ENCODE measurements at regions of chr12 and their contacts with region 1.

Region 1: GRCh38 chr12:47837190-47838171 is 17.8 kb upstream of the HDAC7 start:
- DNase-seq: peak; percentile 77
- ATAC-seq: peak; percentile 23
- H3K4me3 Mint-ChIP-seq: peak overlapping the region; percentile 44
- H3K27ac Mint-ChIP-seq: peak overlapping the region; percentile 68
- H3K4me1 Mint-ChIP-seq: peaks cover 61% of the 10 kb centered on the region
- H3K27me3 Mint-ChIP-seq: peaks cover 2% of the 10 kb centered on the region

Region 2: DNA sequence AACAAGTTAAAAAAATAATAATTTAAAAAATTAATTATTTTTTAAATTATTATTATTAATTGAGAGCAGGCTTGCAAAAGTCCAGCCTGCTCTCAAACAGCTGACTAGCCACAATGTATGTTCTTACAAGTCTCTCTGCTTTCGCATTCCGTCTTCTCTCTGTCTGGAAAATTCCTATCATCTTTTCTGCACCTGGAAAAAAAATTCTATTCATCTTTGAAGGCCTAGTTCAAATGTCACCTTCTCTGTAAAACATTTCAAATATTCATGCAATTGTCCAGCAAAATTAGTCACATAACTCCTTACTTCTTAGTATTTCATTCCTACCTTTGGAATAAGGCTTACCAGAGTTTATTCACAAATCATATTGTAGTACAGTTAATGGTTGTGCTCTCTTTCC is 207.2 kb before region 1 on chr12:
- CTCF ChIA-PET with region 1: no interaction called
- POLR2A ChIA-PET with region 1: no interaction called
- DNase-seq: no peak
- ATAC-seq: no peak
- H3K4me3 Mint-ChIP-seq: no peak overlapping the region
- H3K27ac Mint-ChIP-seq: no peak overlapping the region
- H3K4me1 Mint-ChIP-seq: no peaks in the 10 kb centered on the region
- H3K27me3 Mint-ChIP-seq: no peaks in the 10 kb centered on the region

Region 3: DNA sequence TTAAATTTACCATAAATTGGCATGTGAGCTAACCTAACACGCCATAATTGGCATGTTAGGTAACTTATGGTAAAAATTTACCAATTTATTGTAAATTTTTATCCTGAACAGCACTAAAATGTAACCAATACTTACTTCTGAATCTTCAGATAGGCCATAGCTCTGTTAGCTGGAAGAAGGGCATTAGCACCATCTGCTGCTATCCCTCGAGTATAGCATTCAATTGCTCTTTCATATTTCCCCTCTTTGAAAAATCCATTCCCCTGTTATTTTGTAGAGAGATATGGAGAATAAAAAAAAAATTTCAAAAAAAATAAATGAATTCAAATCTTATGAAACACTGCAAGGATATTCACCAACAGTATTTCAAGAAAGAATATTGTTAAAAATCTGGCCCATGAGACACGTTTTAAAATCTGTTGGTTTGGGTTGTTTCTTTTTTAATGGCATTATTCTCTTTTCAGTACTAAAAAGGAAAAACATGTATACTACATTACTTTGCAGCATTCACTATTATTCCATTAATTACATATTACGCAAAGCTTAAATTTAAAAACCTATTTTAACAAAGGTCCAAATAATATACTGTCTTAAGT is 150.7 kb before region 1 on chr12:
- CTCF ChIA-PET with region 1: no interaction called
- POLR2A ChIA-PET with region 1: no interaction called
- DNase-seq: peak; percentile 48
- ATAC-seq: peak; percentile 58
- H3K4me3 Mint-ChIP-seq: no peak overlapping the region
- H3K27ac Mint-ChIP-seq: no peak overlapping the region
- H3K4me1 Mint-ChIP-seq: no peaks in the 10 kb centered on the region
- H3K27me3 Mint-ChIP-seq: no peaks in the 10 kb centered on the region

Region 4: GRCh38 chr12:47705566-47706425 is 131.7 kb before region 1 on chr12 and contains the start of gene RPAP3:
- CTCF ChIA-PET with region 1: interaction called, 12 read pairs
- POLR2A ChIA-PET with region 1: interaction called, 10 read pairs
- DNase-seq: peak; percentile 98
- ATAC-seq: peak; percentile 96
- H3K4me3 Mint-ChIP-seq: peak within 1 kb of the TSS; percentile 92
- H3K27ac Mint-ChIP-seq: peak within 1 kb of the TSS; percentile 97
- H3K4me1 Mint-ChIP-seq: peaks cover 57% of the 10 kb centered on the region
- H3K27me3 Mint-ChIP-seq: no peaks in the 10 kb centered on the region
- total RNA-seq, gene RPAP3: 41.6 to 41.7 TPM

Region 5: GRCh38 chr12:47758834-47759690 is 78.4 kb before region 1 on chr12 and contains the start of gene RAPGEF3:
- CTCF ChIA-PET with region 1: interaction called, 15 read pairs
- POLR2A ChIA-PET with region 1: interaction called, 3 read pairs
- DNase-seq: peak; percentile 64
- ATAC-seq: peak; percentile 86
- H3K4me3 Mint-ChIP-seq: peak within 1 kb of the TSS; percentile 67
- H3K27ac Mint-ChIP-seq: no peak within 1 kb of the TSS
- H3K4me1 Mint-ChIP-seq: peaks cover 38% of the 10 kb centered on the region
- H3K27me3 Mint-ChIP-seq: peaks cover 4% of the 10 kb centered on the region
- total RNA-seq, gene RAPGEF3: 0.24 TPM in 1 of 2 experiments, not detected in the other

Region 6: GRCh38 chr12:47797441-47797840 is 40.0 kb before region 1 on chr12:
- CTCF ChIA-PET with region 1: interaction called, 1,049 read pairs
- POLR2A ChIA-PET with region 1: interaction called, 10 read pairs
- DNase-seq: peak; percentile 57
- ATAC-seq: peak; percentile 73
- H3K4me3 Mint-ChIP-seq: no peak overlapping the region
- H3K27ac Mint-ChIP-seq: peak overlapping the region; percentile 83
- H3K4me1 Mint-ChIP-seq: peaks cover 47% of the 10 kb centered on the region
- H3K27me3 Mint-ChIP-seq: no peaks in the 10 kb centered on the region

Region 7: GRCh38 chr12:47870175-47870781 is 32.8 kb after region 1 on chr12:
- CTCF ChIA-PET with region 1: interaction called, 10 read pairs
- POLR2A ChIA-PET with region 1: no interaction called
- DNase-seq: no peak
- ATAC-seq: peak; percentile 38
- H3K4me3 Mint-ChIP-seq: no peak overlapping the region
- H3K27ac Mint-ChIP-seq: peak overlapping the region; percentile 41
- H3K4me1 Mint-ChIP-seq: peaks cover 48% of the 10 kb centered on the region
- H3K27me3 Mint-ChIP-seq: no peaks in the 10 kb centered on the region

Region 8: DNA sequence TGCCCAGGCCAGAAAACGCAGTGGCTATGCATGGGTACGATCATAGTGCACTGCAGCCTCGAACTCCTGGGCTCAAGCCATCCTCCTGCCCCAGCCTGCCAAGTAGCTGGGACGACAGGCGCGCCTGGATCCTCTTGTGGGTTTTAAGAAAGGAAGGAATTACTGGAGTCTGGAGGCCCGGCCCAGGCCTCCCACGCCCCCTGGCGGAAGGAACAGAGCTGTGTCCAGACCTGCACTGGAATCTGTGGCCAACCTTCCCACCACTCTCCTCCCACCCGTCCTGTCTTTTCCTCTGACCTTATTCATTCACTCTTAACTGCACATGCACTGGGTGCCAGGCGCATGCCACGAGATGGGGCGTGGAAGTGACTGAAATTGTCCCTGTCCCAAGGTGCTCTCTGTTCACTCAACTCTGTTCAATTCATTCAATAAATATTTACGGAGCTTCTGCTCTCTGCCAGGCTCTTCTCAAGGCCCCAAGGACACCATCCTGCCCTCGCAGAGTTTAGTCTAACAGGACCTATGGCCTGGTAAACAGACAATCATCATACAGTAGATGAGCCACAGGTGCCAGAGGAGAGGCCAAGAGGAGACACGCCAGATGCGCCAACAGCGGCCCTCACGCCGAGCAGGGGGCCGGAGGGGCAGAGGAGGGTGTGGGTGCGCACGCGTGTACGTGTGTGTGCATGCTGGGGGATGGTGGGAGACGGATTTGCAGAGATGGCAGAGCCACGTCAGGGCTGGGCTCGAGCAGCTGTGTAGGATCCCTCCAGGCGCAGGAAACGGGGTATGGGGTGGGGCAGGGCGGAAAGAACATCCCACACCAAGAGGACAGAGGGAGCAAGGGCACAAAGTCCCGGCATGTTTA is 112.2 kb after region 1 on chr12:
- CTCF ChIA-PET with region 1: interaction called, 13 read pairs
- POLR2A ChIA-PET with region 1: no interaction called
- DNase-seq: peak; percentile 50
- ATAC-seq: peak; percentile 75
- H3K4me3 Mint-ChIP-seq: no peak overlapping the region
- H3K27ac Mint-ChIP-seq: no peak overlapping the region
- H3K4me1 Mint-ChIP-seq: peaks cover 12% of the 10 kb centered on the region
- H3K27me3 Mint-ChIP-seq: peaks cover 18% of the 10 kb centered on the region

Region 9: GRCh38 chr12:47970843-47971242 is 133.4 kb after region 1 on chr12:
- CTCF ChIA-PET with region 1: no interaction called
- POLR2A ChIA-PET with region 1: no interaction called
- DNase-seq: no peak
- ATAC-seq: no peak
- H3K4me3 Mint-ChIP-seq: no peak overlapping the region
- H3K27ac Mint-ChIP-seq: no peak overlapping the region
- H3K4me1 Mint-ChIP-seq: peaks cover 7% of the 10 kb centered on the region
- H3K27me3 Mint-ChIP-seq: no peaks in the 10 kb centered on the region

Region 10: DNA sequence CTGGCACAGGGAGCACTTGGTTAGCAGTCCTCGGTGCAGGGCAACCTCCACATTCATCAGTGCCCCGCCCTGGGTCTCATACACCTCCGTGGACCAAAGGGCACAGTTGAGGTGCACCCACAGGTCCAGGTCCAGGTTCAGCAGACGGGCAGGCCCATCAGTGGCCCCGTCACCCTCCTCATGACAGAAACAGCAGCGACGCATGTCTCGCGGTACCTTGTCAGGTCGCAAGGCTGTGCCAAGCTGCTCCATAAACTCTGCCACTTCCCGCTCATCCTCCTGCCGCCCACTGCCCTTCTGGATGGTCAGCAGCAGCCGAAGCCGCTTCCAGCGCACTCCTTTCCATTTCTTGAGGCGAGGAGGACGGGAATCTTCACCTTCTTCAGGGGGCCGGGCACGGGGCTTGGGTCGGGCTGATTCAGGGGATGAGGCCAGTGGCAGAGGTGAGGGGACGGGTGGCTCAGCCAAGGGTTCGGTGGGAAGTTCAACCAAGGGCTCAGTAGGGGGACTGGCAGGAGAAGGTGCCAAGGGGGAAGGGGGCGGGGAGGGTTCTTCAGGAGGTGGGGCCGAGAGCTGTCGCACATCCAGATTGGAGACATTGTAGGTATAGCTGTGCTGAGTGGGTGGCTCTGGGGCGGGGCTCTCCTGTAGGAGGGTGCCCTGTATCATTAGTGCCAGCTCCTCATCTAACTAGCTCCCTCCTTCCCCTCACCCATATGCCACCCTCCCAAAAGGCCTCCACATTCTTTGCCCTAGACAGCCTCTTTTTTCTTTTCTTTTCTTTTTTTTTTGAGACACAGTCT is 1189.4 kb after region 1 on chr12:
- CTCF ChIA-PET with region 1: no interaction called
- POLR2A ChIA-PET with region 1: no interaction called
- DNase-seq: no peak
- ATAC-seq: no peak
- H3K4me3 Mint-ChIP-seq: no peak overlapping the region
- H3K27ac Mint-ChIP-seq: peak overlapping the region; percentile 34
- H3K4me1 Mint-ChIP-seq: no peaks in the 10 kb centered on the region
- H3K27me3 Mint-ChIP-seq: no peaks in the 10 kb centered on the region

Measured in activated CD8-positive, alpha-beta T cell treated with anti-CD3 and anti-CD28 coated beads, Interleukin-2, amount 10 ng/mL, durations not matched to agents 7 days and 5 days (primary cell).